ENCODE measurements at regions of chr4 and their contacts with region 1.

Region 1: GRCh38 chr4:113781439-113782040 is 20.0 kb upstream of the CAMK2D start:
- DNase-seq: no peak
- ATAC-seq: peak in 1 of 8 donors; percentile 41
- H3K4me3 ChIP-seq: no peak overlapping the region
- H3K27ac ChIP-seq: no peak overlapping the region
- H3K4me1 ChIP-seq: peaks cover 0 to 32% (median 0%) of the 10 kb centered on the region in 9 donors
- H3K27me3 ChIP-seq: no peaks in the 10 kb centered on the region
- CTCF ChIP-seq: peak; percentile 33 to 81 (median 73)

Region 2: GRCh38 chr4:113881256-113881655 is 99.7 kb after region 1 on chr4:
- intact Hi-C with region 1: loop called in 2 of 10 experiments (anchors 10 kb)
- DNase-seq: no peak
- ATAC-seq: no peak
- H3K4me3 ChIP-seq: no peak overlapping the region
- H3K27ac ChIP-seq: no peak overlapping the region
- H3K4me1 ChIP-seq: peaks cover 0 to 3% (median 0%) of the 10 kb centered on the region in 9 donors
- H3K27me3 ChIP-seq: no peaks in the 10 kb centered on the region
- CTCF ChIP-seq: no peak

Region 3: GRCh38 chr4:113901994-113902787 is 120.7 kb after region 1 on chr4:
- intact Hi-C with region 1: loop called in 1 of 10 experiments (anchors 10 kb)
- DNase-seq: no peak
- ATAC-seq: no peak
- H3K4me3 ChIP-seq: no peak overlapping the region
- H3K27ac ChIP-seq: peak overlapping the region in 1 of 10 donors; percentile 24
- H3K4me1 ChIP-seq: peaks cover 0 to 8% (median 0%) of the 10 kb centered on the region in 9 donors
- H3K27me3 ChIP-seq: no peaks in the 10 kb centered on the region
- CTCF ChIP-seq: peak in 1 of 9 donors; percentile 15

Region 4: DNA sequence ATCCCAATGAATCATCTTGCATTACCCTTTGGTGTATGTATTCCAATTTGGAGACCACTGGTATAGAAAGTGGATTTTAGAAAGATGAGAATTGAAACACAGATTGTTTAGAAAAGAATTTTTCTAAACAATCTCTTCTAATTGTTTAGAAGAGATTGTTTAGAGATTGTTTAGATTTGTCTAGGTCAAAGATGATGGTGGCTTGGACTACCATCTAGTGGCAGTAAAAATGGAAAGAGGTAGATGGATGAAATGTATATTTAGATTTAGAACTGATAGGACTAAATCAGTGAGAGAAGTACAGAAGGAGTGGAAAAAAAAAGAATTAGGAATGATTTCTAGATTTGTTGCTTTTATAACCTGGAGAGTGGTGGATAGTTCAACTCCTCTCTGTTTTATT is 127.3 kb after region 1 on chr4:
- intact Hi-C with region 1: loop called in 1 of 10 experiments (anchors 5 kb)
- DNase-seq: no peak
- ATAC-seq: no peak
- H3K4me3 ChIP-seq: no peak overlapping the region
- H3K27ac ChIP-seq: no peak overlapping the region
- H3K4me1 ChIP-seq: peaks cover 0 to 4% (median 0%) of the 10 kb centered on the region in 9 donors
- H3K27me3 ChIP-seq: no peaks in the 10 kb centered on the region
- CTCF ChIP-seq: peak in 3 of 9 donors; percentile 25 to 34 (median 30)

Region 5: DNA sequence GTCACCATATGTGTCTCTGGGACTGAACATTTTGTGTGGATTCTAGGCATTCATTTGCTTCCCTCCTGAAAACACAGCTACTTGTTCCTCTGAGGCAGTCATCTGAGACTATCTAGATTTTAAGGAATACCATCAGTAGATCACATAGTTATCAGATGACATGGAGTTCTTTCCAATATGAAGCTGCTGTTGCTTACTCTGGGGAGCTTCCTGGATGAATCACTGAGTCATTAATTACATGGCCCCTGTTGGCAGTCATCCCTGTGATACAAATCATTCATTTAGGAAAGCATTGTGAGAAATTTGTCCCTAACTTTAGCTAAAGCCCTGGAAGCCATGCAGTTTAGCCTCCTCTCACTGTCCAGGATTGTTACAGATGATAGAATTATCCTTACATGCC is 296.1 kb after region 1 on chr4:
- intact Hi-C with region 1: loop called in 5 of 10 experiments (anchors 5 to 10 kb)
- DNase-seq: no peak
- ATAC-seq: no peak
- H3K4me3 ChIP-seq: no peak overlapping the region
- H3K27ac ChIP-seq: no peak overlapping the region
- H3K4me1 ChIP-seq: peaks cover 0 to 4% (median 0%) of the 10 kb centered on the region in 9 donors
- H3K27me3 ChIP-seq: no peaks in the 10 kb centered on the region
- CTCF ChIP-seq: no peak

Region 6: DNA sequence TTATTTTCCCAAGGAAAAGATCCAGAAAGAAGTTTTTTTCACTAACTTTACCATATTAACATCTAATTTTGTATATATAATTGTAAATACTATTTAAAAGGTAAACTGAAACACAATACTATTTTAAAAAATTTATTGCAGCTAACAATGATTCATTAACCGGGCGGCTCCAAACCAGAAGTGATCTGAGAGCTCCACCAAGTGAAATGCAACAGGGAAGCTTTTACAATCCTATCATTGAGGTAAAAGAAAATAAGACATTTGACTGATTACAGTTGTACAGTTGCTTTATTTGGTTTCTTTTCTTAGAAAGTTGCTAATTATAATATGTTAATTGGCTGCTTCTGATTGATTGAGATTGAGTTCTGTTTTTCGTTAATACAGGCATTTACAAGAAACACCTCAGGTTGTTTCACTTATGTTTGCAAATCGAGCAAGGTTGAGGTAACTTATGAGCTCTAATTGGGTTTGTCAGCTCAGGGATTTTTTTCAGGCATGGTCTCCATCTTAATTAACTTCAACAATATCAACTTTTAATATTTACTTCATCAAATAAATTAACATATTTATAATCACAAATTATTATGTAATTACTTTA is 596.9 kb after region 1 on chr4:
- intact Hi-C with region 1: loop called in 7 of 10 experiments (anchors 5 to 10 kb)
- DNase-seq: no peak
- ATAC-seq: no peak
- H3K4me3 ChIP-seq: no peak overlapping the region
- H3K27ac ChIP-seq: no peak overlapping the region
- H3K4me1 ChIP-seq: no peaks in the 10 kb centered on the region
- H3K27me3 ChIP-seq: no peaks in the 10 kb centered on the region
- CTCF ChIP-seq: peak in 7 of 9 donors; percentile 8 to 69 (median 55)

Region 7: GRCh38 chr4:114386637-114387233 is 605.2 kb after region 1 on chr4:
- intact Hi-C with region 1: loop called in 2 of 10 experiments (anchors 10 kb)
- DNase-seq: no peak
- ATAC-seq: no peak
- H3K4me3 ChIP-seq: no peak overlapping the region
- H3K27ac ChIP-seq: no peak overlapping the region
- H3K4me1 ChIP-seq: no peaks in the 10 kb centered on the region
- H3K27me3 ChIP-seq: peaks cover 0 to 5% (median 0%) of the 10 kb centered on the region in 7 donors
- CTCF ChIP-seq: peak; percentile 32 to 74 (median 65)